H1 (cell line): ENCODE measurements at regions of chr5 and their contacts with region 1.

Region 1: GRCh38 chr5:147558826-147559225 is 49.0 kb upstream of the DPYSL3 start:
- DNase-seq: peak in 1 of 2 experiments; percentile 74
- H3K4me3 ChIP-seq: no peak overlapping the region
- H3K27ac ChIP-seq: no peak overlapping the region
- H3K4me1 ChIP-seq: peaks cover 5 to 26% (median 15%) of the 10 kb centered on the region in 4 experiments; a peak in 6 of 7 replicates
- H3K27me3 ChIP-seq: no peaks in the 10 kb centered on the region
- CTCF ChIP-seq: peak; percentile 59 to 83 (median 70)
- EP300 ChIP-seq: no peak
- POLR2A ChIP-seq: no peak
- RAD21 ChIP-seq: peak; percentile 86 to 91

Region 2: DNA sequence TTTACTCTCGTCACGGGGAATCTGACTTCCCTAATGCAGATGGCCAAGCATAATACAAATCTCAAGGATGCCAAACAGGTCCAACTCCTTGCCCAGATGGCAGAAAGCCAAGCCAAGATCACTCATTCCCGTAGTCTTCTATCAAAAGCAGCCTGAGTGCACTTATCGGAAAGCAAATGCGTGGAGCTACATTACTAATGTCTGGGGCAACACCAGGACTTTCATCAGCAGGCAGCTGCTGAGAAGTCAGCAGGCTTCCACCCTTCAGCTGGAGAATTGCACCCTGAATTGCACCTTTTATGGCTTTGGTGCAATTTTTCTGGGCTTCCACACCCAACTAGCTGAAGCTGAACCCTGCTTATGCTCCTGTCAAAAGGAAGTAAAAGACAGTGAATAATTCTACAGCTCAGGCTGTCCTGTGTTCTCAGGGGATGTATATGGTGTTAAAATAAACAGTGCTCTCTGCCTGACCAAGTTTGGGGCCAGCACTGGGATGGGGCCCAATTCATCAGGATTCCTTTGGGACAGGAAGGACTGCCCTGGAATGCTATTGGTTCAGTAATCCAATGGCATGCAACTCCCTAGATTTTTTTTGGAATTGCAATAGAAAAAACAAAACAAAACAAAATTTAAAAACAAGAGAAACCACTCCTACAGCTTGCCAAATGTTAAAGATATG is 141.6 kb before region 1 on chr5:
- CTCF ChIA-PET with region 1: interaction called, 19 read pairs
- POLR2A ChIA-PET with region 1: no interaction called
- DNase-seq: no peak
- H3K4me3 ChIP-seq: no peak overlapping the region
- H3K27ac ChIP-seq: no peak overlapping the region
- H3K4me1 ChIP-seq: no peaks in the 10 kb centered on the region; a peak in 1 of 7 replicates
- H3K27me3 ChIP-seq: no peaks in the 10 kb centered on the region
- CTCF ChIP-seq: no peak
- EP300 ChIP-seq: no peak
- POLR2A ChIP-seq: no peak
- RAD21 ChIP-seq: no peak

Region 3: DNA sequence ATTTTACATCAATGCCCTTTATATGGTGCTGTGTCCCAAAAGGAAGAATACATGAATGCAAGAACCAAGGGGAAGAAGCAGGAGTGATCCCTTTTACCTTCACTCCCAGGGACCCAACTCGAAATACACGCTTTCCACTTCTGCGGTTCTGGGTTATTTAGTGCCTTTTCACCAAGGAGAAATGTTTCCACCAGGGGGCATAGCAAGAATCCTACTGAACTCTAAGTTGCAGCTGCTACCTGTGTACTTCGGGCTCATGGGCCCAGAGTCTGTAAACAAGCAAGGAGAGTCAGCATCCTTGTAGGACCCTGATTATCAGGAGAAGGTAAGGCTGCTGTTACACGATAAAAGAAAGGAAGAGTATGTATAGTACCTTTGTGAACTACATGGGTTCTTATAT is 94.6 kb before region 1 on chr5:
- CTCF ChIA-PET with region 1: interaction called, 54 read pairs
- POLR2A ChIA-PET with region 1: interaction called, 12 read pairs
- DNase-seq: no peak
- H3K4me3 ChIP-seq: no peak overlapping the region
- H3K27ac ChIP-seq: no peak overlapping the region
- H3K4me1 ChIP-seq: peaks cover 3 to 24% (median 13%) of the 10 kb centered on the region in 4 experiments; a peak in 6 of 7 replicates
- H3K27me3 ChIP-seq: no peaks in the 10 kb centered on the region
- CTCF ChIP-seq: peak; percentile 7 to 81 (median 79)
- EP300 ChIP-seq: no peak
- POLR2A ChIP-seq: no peak
- RAD21 ChIP-seq: peak; percentile 69 to 82

Region 4: DNA sequence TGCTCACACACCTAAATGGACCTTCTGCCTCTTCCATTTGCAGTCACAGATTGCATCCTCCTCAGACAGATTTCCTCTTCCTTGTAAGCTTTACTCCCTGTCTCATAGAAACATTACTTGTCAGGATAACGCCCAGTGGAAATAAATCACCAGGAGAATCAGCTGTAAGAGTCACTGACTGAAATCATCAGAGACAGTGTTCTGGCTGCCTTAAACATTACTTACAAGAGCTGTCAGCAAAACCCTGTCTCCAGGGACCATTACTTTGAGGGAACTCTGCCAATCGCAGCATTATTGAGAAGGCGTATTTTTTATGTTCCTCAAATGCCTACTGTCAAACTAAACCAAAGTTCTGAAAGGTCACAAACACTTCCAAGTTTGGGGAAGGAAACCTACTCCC is 54.8 kb before region 1 on chr5:
- CTCF ChIA-PET with region 1: interaction called, 12 read pairs
- POLR2A ChIA-PET with region 1: interaction called, 3 read pairs
- DNase-seq: no peak
- H3K4me3 ChIP-seq: no peak overlapping the region
- H3K27ac ChIP-seq: no peak overlapping the region
- H3K4me1 ChIP-seq: peaks cover 0 to 8% (median 2%) of the 10 kb centered on the region in 4 experiments; a peak in 3 of 7 replicates
- H3K27me3 ChIP-seq: no peaks in the 10 kb centered on the region
- CTCF ChIP-seq: no peak
- EP300 ChIP-seq: no peak
- POLR2A ChIP-seq: no peak
- RAD21 ChIP-seq: no peak

Region 5: DNA sequence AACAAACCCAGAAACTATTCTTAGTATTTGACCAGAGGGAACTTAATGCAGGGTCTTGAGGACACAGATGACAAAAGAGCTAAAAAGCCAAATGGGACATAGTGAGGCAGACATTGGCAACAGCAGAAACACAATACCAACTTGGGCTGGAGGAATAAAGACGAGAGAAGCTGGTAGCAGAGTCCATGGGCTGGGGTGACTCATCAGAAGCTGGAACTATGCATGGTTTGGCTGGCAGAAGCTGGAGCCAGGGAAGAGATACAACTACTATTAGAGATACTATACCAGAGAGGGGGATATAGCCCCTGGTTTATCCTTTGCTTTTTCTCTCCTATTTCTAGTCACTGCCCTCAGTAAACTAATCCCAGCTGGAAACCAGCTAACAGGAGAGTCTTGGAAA is 19.8 kb before region 1 on chr5:
- CTCF ChIA-PET with region 1: interaction called, 11 read pairs
- POLR2A ChIA-PET with region 1: interaction called, 3 read pairs
- DNase-seq: no peak
- H3K4me3 ChIP-seq: no peak overlapping the region
- H3K27ac ChIP-seq: no peak overlapping the region
- H3K4me1 ChIP-seq: no peaks in the 10 kb centered on the region
- H3K27me3 ChIP-seq: no peaks in the 10 kb centered on the region
- CTCF ChIP-seq: no peak
- EP300 ChIP-seq: no peak
- POLR2A ChIP-seq: no peak
- RAD21 ChIP-seq: no peak

Region 6: GRCh38 chr5:147601652-147602051 is 42.8 kb after region 1 on chr5:
- CTCF ChIA-PET with region 1: no interaction called
- POLR2A ChIA-PET with region 1: no interaction called
- DNase-seq: no peak
- H3K4me3 ChIP-seq: no peak overlapping the region
- H3K27ac ChIP-seq: no peak overlapping the region
- H3K4me1 ChIP-seq: no peaks in the 10 kb centered on the region
- H3K27me3 ChIP-seq: no peaks in the 10 kb centered on the region
- CTCF ChIP-seq: no peak
- EP300 ChIP-seq: no peak
- POLR2A ChIP-seq: no peak
- RAD21 ChIP-seq: no peak